ENCODE measurements at regions of chr14 and their contacts with region 1.

Region 1: GRCh38 chr14:105065280-105066228 is at the start of gene GPR132:
- DNase-seq: peak; percentile 98
- ATAC-seq: peak; percentile 76
- H3K4me3 Mint-ChIP-seq: peak within 1 kb of the TSS; percentile 95
- H3K27ac Mint-ChIP-seq: peak within 1 kb of the TSS; percentile 97
- H3K4me1 Mint-ChIP-seq: peaks cover 65% of the 10 kb centered on the region
- H3K27me3 Mint-ChIP-seq: no peaks in the 10 kb centered on the region
- total RNA-seq, gene GPR132: 47.4 to 49.4 TPM

Region 2: DNA sequence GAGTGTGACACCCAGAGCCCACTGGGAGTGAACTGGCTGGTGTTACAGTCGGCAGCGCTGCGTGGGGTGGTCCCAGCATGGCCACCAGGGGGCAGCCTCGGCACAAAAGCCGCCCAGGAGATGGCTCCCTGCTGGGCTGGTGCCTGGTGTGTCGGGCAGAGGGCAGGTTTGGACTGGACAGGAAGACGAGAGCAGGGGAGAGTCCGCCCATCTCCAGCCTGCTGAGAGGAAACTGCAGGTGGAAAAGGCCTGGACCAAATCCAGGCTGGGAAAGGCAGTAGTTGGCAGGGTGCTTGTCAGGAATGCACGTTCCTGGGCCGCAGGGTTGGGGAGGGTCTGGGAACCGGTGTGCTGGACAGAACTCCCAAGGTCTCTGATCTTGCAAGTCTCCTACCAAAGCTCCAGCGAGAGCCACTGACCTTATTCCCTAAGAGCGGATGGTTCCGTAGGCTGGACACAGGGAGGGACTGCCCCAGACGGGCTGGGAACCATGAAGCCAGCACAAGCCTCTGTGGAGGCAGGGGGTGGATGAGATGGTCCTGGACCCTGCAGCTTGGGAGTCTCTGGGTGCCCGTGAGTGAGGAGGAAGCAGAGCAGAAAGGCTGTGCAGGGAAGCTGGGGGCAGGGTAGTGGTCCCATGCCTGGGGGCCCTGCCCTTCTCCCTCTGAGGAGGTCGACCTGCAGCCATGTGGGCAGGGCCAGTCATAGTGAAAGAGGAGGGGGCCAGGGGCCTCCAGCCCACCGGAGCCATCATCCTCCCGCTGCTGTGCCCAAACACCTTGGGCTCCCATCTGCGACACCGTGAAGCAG is 89.2 kb before region 1 on chr14:
- CTCF ChIA-PET with region 1: interaction called, 12 read pairs
- DNase-seq: peak; percentile 88
- ATAC-seq: peak; percentile 85
- H3K4me3 Mint-ChIP-seq: no peak overlapping the region
- H3K27ac Mint-ChIP-seq: no peak overlapping the region
- H3K4me1 Mint-ChIP-seq: peaks cover 10% of the 10 kb centered on the region
- H3K27me3 Mint-ChIP-seq: peaks cover 33% of the 10 kb centered on the region